SK-N-SH (cell line): ENCODE measurements at regions of chr3 and their contacts with region 1.

Region 1: DNA sequence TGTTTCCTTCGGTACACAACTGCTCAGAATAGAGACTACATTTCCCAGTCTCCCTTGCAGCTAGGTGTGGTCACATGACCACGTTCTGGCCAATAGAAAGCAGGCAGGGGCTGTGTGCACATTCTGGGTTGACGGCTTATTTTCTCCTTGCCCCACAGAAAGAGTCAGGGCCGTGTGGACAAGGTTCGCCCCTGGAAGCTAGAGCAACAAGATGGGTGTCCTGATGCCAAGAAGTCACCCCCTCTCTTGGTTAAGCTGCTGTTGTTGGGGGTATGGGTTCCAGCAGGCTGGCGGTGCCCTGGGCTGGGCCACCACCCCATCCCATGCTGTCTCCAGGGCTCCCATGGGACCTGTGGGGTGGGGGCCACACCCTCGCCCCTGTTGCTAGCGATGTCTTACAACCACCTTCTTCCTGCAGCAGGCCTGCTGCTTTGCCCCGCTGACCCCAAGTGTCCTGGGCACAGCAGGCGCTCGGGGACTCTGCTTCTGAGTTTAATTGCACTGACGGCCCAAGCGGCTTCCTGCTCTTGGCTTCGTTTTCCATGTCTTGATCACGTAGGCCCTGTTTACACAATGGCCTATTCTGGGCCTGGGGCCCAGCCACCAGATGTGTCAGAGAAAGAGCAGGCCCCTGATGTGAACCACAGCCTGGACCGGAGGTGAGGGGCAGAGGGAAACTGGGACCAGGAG is 24.9 kb downstream of the ABTB1 start:
- DNase-seq: peak; percentile 83
- H3K4me3 ChIP-seq: peak overlapping the region in 1 of 2 experiments; percentile 15; a peak in 1 of 4 replicates
- H3K27ac ChIP-seq: peak overlapping the region; percentile 69 to 92
- H3K4me1 ChIP-seq: peaks cover 11 to 60% of the 10 kb centered on the region in 2 experiments; a peak in 2 of 4 replicates
- H3K27me3 ChIP-seq: no peaks in the 10 kb centered on the region
- CTCF ChIP-seq: no peak
- EP300 ChIP-seq: no peak
- RAD21 ChIP-seq: no peak

Region 2: DNA sequence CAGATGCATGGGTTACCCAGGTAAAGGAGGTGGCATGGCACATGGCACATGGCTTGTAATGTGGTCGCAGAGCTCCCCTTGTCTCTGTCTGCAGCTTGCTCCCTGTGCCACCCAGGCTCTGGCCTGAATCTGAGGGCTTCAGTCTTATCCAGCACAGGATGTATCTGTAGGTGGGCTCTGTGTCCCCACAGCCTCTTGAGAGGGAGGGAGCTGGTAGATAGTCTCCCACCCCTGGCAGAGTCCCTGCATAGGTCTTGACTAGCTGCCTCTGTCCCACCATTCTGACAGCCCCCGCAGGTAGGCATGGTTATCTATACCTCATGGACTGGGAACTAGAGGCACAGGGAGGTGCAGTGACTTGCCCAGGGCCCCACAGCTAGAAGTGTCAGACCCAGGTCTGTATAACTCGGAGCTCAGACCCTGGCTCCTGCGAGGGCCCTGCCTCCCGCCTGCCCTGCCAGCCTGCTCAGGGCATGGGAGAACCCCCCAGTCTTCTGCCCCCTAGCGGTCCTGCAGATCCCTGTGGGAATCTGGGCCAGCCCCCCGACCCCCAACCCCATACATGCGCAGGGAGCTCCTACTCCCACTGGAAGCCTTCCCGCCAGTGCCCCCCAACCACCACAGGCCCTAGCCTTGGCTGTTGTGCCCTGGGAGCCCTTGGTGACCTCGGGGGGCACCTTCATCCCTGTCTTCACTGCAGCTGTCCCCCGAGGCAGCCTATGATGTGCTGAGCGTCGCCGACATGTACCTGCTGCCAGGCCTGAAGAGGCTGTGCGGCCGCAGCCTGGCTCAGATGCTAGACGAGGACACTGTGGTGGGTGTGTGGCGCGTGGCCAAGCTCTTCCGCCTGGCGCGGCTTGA is 18.2 kb before region 1 on chr3:
- CTCF ChIA-PET with region 1: interaction called, 34 read pairs
- POLR2A ChIA-PET with region 1: interaction called, 3 read pairs
- DNase-seq: no peak
- H3K4me3 ChIP-seq: no peak overlapping the region
- H3K27ac ChIP-seq: no peak overlapping the region
- H3K4me1 ChIP-seq: peaks cover 0 to 2% of the 10 kb centered on the region in 2 experiments; a peak in 1 of 4 replicates
- H3K27me3 ChIP-seq: no peaks in the 10 kb centered on the region
- CTCF ChIP-seq: no peak
- EP300 ChIP-seq: no peak
- RAD21 ChIP-seq: no peak

Region 3: GRCh38 chr3:127743351-127744252 is 45.9 kb after region 1 on chr3:
- CTCF ChIA-PET with region 1: interaction called, 11 read pairs
- POLR2A ChIA-PET with region 1: interaction called, 4 read pairs
- DNase-seq: no peak
- H3K4me3 ChIP-seq: no peak overlapping the region
- H3K27ac ChIP-seq: peak overlapping the region in 1 of 2 experiments; percentile 83; a peak in 2 of 4 replicates
- H3K4me1 ChIP-seq: peaks cover 11 to 39% of the 10 kb centered on the region in 2 experiments
- H3K27me3 ChIP-seq: no peaks in the 10 kb centered on the region
- CTCF ChIP-seq: no peak
- EP300 ChIP-seq: no peak
- RAD21 ChIP-seq: no peak

Region 4: GRCh38 chr3:127791211-127791946 is 93.7 kb after region 1 on chr3:
- CTCF ChIA-PET with region 1: interaction called, 38 read pairs
- POLR2A ChIA-PET with region 1: interaction called, 14 read pairs
- DNase-seq: no peak
- H3K4me3 ChIP-seq: no peak overlapping the region
- H3K27ac ChIP-seq: no peak overlapping the region
- H3K4me1 ChIP-seq: peaks cover 11 to 56% of the 10 kb centered on the region in 2 experiments; a peak in 3 of 4 replicates
- H3K27me3 ChIP-seq: no peaks in the 10 kb centered on the region
- CTCF ChIP-seq: no peak; the same call in 1 of the 2 replicates
- EP300 ChIP-seq: no peak
- RAD21 ChIP-seq: peak; percentile 29

Region 5: GRCh38 chr3:127831723-127832172 is 134.1 kb after region 1 on chr3:
- CTCF ChIA-PET with region 1: interaction called, 15 read pairs
- POLR2A ChIA-PET with region 1: no interaction called
- DNase-seq: peak; percentile 67
- H3K4me3 ChIP-seq: no peak overlapping the region
- H3K27ac ChIP-seq: no peak overlapping the region
- H3K4me1 ChIP-seq: no peaks in the 10 kb centered on the region
- H3K27me3 ChIP-seq: no peaks in the 10 kb centered on the region
- CTCF ChIP-seq: peak; percentile 49
- EP300 ChIP-seq: no peak
- RAD21 ChIP-seq: peak; percentile 73

Region 6: GRCh38 chr3:127929824-127930413 is 232.2 kb after region 1 on chr3:
- CTCF ChIA-PET with region 1: no interaction called
- POLR2A ChIA-PET with region 1: no interaction called
- DNase-seq: no peak
- H3K4me3 ChIP-seq: no peak overlapping the region
- H3K27ac ChIP-seq: no peak overlapping the region
- H3K4me1 ChIP-seq: peaks cover 0 to 3% of the 10 kb centered on the region in 2 experiments; a peak in 1 of 4 replicates
- H3K27me3 ChIP-seq: peaks cover 10% of the 10 kb centered on the region
- CTCF ChIP-seq: no peak
- EP300 ChIP-seq: no peak
- RAD21 ChIP-seq: no peak

Region 7: GRCh38 chr3:127959846-127960245 is 262.1 kb after region 1 on chr3:
- CTCF ChIA-PET with region 1: interaction called, 141 read pairs
- POLR2A ChIA-PET with region 1: no interaction called
- DNase-seq: peak; percentile 60
- H3K4me3 ChIP-seq: no peak overlapping the region
- H3K27ac ChIP-seq: no peak overlapping the region
- H3K4me1 ChIP-seq: peaks cover 0 to 10% of the 10 kb centered on the region in 2 experiments; a peak in 2 of 4 replicates
- H3K27me3 ChIP-seq: no peaks in the 10 kb centered on the region
- CTCF ChIP-seq: peak; percentile 54
- EP300 ChIP-seq: no peak
- RAD21 ChIP-seq: peak; percentile 85